ENCODE measurements at regions of chr15 and their contacts with region 1.

Region 1: GRCh38 chr15:90648137-90649070 is 68.7 kb upstream of the BLM start:
- DNase-seq: peak; percentile 95
- ATAC-seq: peak; percentile 84
- H3K4me3 Mint-ChIP-seq: peak overlapping the region; percentile 46
- H3K27ac Mint-ChIP-seq: peak overlapping the region; percentile 94
- H3K4me1 Mint-ChIP-seq: peaks cover 35% of the 10 kb centered on the region
- H3K27me3 Mint-ChIP-seq: no peaks in the 10 kb centered on the region

Region 2: GRCh38 chr15:90400406-90401314 is 247.7 kb before region 1 on chr15:
- CTCF ChIA-PET with region 1: no interaction called
- DNase-seq: peak; percentile 86
- ATAC-seq: peak; percentile 97
- H3K4me3 Mint-ChIP-seq: peak overlapping the region; percentile 58
- H3K27ac Mint-ChIP-seq: peak overlapping the region; percentile 94
- H3K4me1 Mint-ChIP-seq: peaks cover 67% of the 10 kb centered on the region
- H3K27me3 Mint-ChIP-seq: no peaks in the 10 kb centered on the region

Region 3: DNA sequence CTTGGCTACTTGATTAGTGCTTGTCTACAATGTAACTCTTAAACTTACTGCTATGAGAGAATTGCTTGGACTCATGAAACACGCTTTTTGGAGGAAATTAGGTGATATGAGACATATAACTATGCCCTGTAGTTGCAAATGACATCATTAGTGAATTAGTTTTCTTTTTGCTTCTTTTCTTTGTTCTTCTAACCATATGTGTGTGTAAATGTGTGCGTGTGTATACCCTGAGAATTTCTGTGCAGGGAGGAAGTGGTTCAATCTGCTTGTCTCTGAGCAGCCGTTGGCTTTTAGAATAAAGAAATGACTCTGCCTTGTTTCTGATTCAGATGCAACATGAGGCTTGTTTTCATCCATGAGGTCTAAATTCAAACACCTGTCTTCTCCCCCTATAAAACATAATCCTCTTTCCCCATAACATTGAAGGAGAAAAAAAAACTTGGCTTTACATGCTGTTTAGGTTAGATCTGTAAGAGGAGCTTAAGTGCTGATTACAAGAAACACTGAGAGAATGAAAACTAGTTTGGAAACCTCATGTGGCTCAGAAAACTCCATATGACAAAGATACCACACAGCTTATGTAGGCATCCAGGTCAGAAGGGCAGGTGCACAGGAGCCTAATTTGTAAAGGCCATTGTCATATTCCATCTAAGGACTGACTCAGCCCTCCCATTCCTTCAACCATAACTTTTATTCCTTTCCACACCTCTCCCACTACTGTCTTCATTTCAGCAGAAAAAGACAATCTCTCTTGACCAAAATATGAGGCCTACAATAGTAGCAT is 38.2 kb after region 1 on chr15:
- CTCF ChIA-PET with region 1: interaction called, 33 read pairs
- DNase-seq: peak; percentile 77
- ATAC-seq: peak; percentile 96
- H3K4me3 Mint-ChIP-seq: peak overlapping the region; percentile 4
- H3K27ac Mint-ChIP-seq: peak overlapping the region; percentile 96
- H3K4me1 Mint-ChIP-seq: peaks cover 56% of the 10 kb centered on the region
- H3K27me3 Mint-ChIP-seq: no peaks in the 10 kb centered on the region

Region 4: GRCh38 chr15:90691982-90692773 is 43.8 kb after region 1 on chr15:
- CTCF ChIA-PET with region 1: interaction called, 33 read pairs
- DNase-seq: no peak
- ATAC-seq: no peak
- H3K4me3 Mint-ChIP-seq: no peak overlapping the region
- H3K27ac Mint-ChIP-seq: peak overlapping the region; percentile 30
- H3K4me1 Mint-ChIP-seq: peaks cover 60% of the 10 kb centered on the region
- H3K27me3 Mint-ChIP-seq: no peaks in the 10 kb centered on the region

Region 5: DNA sequence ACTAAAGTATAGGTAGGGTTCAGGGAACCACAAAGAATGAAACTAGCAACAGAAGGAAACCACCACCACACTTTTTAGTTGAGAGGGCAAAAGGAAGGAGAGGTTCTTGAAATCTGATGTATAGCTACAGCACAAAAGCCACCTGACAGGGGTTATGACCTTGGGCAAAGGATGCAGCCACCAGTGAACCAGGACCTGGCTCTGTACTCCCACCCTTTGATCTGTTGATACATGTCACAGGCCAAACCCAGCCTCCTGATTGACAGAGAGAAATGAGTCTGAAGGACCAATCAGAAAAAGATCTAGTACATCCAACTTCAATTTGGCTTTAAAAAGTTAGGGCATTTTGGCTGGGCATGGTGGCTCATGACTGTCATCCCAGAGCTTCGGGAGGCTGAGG is 48.8 kb after region 1 on chr15:
- CTCF ChIA-PET with region 1: interaction called, 33 read pairs
- DNase-seq: peak; percentile 85
- ATAC-seq: peak; percentile 92
- H3K4me3 Mint-ChIP-seq: no peak overlapping the region
- H3K27ac Mint-ChIP-seq: peak overlapping the region; percentile 92
- H3K4me1 Mint-ChIP-seq: peaks cover 42% of the 10 kb centered on the region
- H3K27me3 Mint-ChIP-seq: no peaks in the 10 kb centered on the region

Region 6: GRCh38 chr15:90716976-90717821 is 68.8 kb after region 1 on chr15 and contains the start of gene BLM:
- CTCF ChIA-PET with region 1: interaction called, 29 read pairs
- DNase-seq: peak; percentile 98
- ATAC-seq: peak; percentile 99
- H3K4me3 Mint-ChIP-seq: peak within 1 kb of the TSS; percentile 80
- H3K27ac Mint-ChIP-seq: peak within 1 kb of the TSS; percentile 95
- H3K4me1 Mint-ChIP-seq: peaks cover 27% of the 10 kb centered on the region
- H3K27me3 Mint-ChIP-seq: no peaks in the 10 kb centered on the region
- total RNA-seq, gene BLM: 83.4 to 92.7 TPM